ENCODE measurements at regions of chr3 and their contacts with region 1.

Region 1: DNA sequence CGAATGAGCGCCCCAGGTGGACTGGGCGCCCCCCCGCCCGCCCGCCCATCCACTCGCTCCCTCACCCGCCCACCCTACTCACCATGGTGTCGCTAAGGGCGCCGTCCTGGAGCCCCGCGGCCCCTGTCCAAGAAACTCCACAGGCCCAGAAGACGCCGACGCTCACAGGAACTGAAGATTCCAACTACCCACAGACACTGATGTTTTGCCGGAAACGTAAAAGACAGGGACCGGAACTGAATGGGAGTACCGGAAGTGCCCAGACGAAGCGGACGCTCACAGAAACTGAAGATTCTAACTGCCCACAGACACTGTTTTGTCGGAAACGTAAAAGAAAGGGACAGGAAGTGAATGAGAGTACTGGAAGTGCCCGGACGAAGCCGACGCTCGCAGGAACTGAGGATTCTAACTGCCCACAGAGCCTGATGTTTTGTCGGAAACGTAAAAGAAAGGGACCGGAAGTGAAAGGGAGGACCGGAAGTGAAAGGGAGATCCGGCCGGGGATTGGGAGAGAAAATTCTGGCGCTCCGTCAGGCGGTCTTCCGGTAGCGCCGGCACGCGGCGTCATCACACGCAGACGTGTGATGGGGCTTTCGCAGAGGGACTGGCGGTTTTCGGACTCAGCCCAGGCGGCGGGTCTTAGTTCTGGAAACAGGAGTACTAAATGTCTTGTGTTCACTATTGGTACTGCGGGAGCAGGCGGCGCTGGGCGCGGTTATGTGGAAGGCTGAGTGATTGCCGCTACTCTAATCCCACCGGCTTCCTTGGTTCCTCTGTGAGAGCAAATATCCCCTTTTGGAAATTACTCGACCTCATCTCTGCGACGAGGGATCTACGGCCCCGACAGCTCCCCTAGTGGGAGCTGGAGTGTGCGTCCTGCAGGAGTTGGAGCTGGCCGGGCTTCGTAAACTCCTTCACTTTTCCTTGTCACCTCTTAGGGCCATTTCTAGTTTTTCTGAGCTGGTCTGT is at the start of gene ISY1:
- DNase-seq: peak; percentile 92
- H3K4me3 ChIP-seq: peak within 1 kb of the TSS; percentile 86 to 99
- H3K27ac ChIP-seq: peak within 1 kb of the TSS; percentile 99 to 100
- H3K4me1 ChIP-seq: peaks cover 0 to 15% of the 10 kb centered on the region in 2 experiments; a peak in 2 of 4 replicates
- H3K27me3 ChIP-seq: no peaks in the 10 kb centered on the region
- CTCF ChIP-seq: peak; percentile 81
- EP300 ChIP-seq: 0 out of 4 replicates have a peak, but pooled peaks of 1 of the 2 experiments have one; percentile 14
- RAD21 ChIP-seq: peak; percentile 44
- polyA plus RNA-seq, gene ISY1: 20.9 and 22.3 TPM in 2 replicates

Region 2: GRCh38 chr3:129176051-129176450 is 14.9 kb after region 1 on chr3:
- CTCF ChIA-PET with region 1: interaction called, 10 read pairs
- POLR2A ChIA-PET with region 1: no interaction called
- DNase-seq: no peak
- H3K4me3 ChIP-seq: no peak overlapping the region
- H3K27ac ChIP-seq: no peak overlapping the region
- H3K4me1 ChIP-seq: peaks cover 2 to 16% of the 10 kb centered on the region in 2 experiments; a peak in 3 of 4 replicates
- H3K27me3 ChIP-seq: no peaks in the 10 kb centered on the region
- CTCF ChIP-seq: no peak
- EP300 ChIP-seq: no peak
- RAD21 ChIP-seq: no peak

Measured in SK-N-SH (cell line).